ENCODE measurements at regions of chr20 and their contacts with region 1.

Region 1: GRCh38 chr20:5529331-5530148 is 212.8 kb upstream of the PROKR2 start:
- DNase-seq: peak; percentile 73 to 91 (median 82)
- ATAC-seq: peak; percentile 91
- H3K4me3 ChIP-seq: peak overlapping the region; percentile 11
- H3K4me3 Mint-ChIP-seq: peak overlapping the region; percentile 43
- H3K27ac ChIP-seq: no peak overlapping the region
- H3K27ac Mint-ChIP-seq: peak overlapping the region; percentile 61
- H3K4me1 ChIP-seq: peaks cover 13% of the 10 kb centered on the region
- H3K4me1 Mint-ChIP-seq: peaks cover 16% of the 10 kb centered on the region
- H3K27me3 ChIP-seq: no peaks in the 10 kb centered on the region
- H3K27me3 Mint-ChIP-seq: no peaks in the 10 kb centered on the region
- CTCF ChIP-seq: peak; percentile 67

Region 2: GRCh38 chr20:5543385-5543784 is 13.8 kb after region 1 on chr20:
- CTCF ChIA-PET with region 1: interaction called, 14 read pairs
- POLR2A ChIA-PET with region 1: no interaction called
- intact Hi-C with region 1: no loop called
- DNase-seq: no peak
- ATAC-seq: no peak
- H3K4me3 ChIP-seq: no peak overlapping the region
- H3K4me3 Mint-ChIP-seq: no peak overlapping the region
- H3K27ac ChIP-seq: no peak overlapping the region
- H3K27ac Mint-ChIP-seq: peak overlapping the region; percentile 3
- H3K4me1 ChIP-seq: no peaks in the 10 kb centered on the region
- H3K4me1 Mint-ChIP-seq: peaks cover 11% of the 10 kb centered on the region
- H3K27me3 ChIP-seq: no peaks in the 10 kb centered on the region
- H3K27me3 Mint-ChIP-seq: no peaks in the 10 kb centered on the region
- CTCF ChIP-seq: no peak

Region 3: GRCh38 chr20:5569021-5569420 is 39.5 kb after region 1 on chr20:
- CTCF ChIA-PET with region 1: interaction called, 20 read pairs
- POLR2A ChIA-PET with region 1: interaction called, 4 read pairs
- intact Hi-C with region 1: loop called in 1 of 2 experiments (anchors 1 kb)
- DNase-seq: peak in 12 of 14 experiments; percentile 20 to 75 (median 40)
- ATAC-seq: peak; percentile 75
- H3K4me3 ChIP-seq: no peak overlapping the region
- H3K4me3 Mint-ChIP-seq: no peak overlapping the region
- H3K27ac ChIP-seq: no peak overlapping the region
- H3K27ac Mint-ChIP-seq: peak overlapping the region; percentile 87
- H3K4me1 ChIP-seq: peaks cover 11% of the 10 kb centered on the region
- H3K4me1 Mint-ChIP-seq: peaks cover 46% of the 10 kb centered on the region
- H3K27me3 ChIP-seq: no peaks in the 10 kb centered on the region
- H3K27me3 Mint-ChIP-seq: no peaks in the 10 kb centered on the region
- CTCF ChIP-seq: peak; percentile 68

Region 4: DNA sequence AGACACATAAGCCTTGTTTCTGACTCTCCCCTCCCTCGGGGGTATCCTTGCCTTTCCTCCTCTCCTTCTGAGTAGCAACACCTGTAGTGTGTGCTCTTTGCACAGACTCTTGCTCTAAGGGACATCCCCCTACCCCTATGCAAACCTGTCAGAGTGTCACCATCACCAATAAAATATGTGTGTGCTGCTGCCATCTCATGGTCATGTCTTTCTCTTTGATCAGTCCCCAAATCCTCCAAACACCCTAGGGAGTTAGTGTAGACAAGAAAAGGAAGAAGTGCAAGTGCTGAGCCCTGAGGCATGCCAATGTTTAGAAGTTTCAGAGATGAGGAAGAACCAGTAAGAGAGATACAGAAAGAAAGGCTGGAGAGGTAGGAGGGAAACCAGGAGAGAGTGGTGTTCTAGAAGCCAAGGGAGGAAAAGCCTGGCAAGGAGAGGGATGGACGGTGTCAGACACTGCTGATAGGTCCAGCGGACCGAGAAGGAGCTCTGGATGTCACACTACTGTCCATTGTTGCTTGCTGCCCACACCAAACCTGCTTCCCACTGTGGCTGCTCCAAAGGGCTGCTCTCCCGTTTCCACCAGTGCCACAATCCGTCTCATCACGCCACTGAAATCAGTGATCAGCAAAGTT is 404.4 kb after region 1 on chr20:
- CTCF ChIA-PET with region 1: no interaction called
- POLR2A ChIA-PET with region 1: no interaction called
- intact Hi-C with region 1: loop called in 1 of 2 experiments (anchors 5 kb)
- DNase-seq: peak in 4 of 14 experiments; percentile 14 to 28 (median 18)
- ATAC-seq: peak; percentile 48
- H3K4me3 ChIP-seq: no peak overlapping the region
- H3K4me3 Mint-ChIP-seq: no peak overlapping the region
- H3K27ac ChIP-seq: no peak overlapping the region
- H3K27ac Mint-ChIP-seq: no peak overlapping the region
- H3K4me1 ChIP-seq: no peaks in the 10 kb centered on the region
- H3K4me1 Mint-ChIP-seq: no peaks in the 10 kb centered on the region
- H3K27me3 ChIP-seq: no peaks in the 10 kb centered on the region
- H3K27me3 Mint-ChIP-seq: no peaks in the 10 kb centered on the region
- CTCF ChIP-seq: no peak

Region 5: GRCh38 chr20:6008254-6008653 is 478.7 kb after region 1 on chr20:
- CTCF ChIA-PET with region 1: interaction called, 14 read pairs
- POLR2A ChIA-PET with region 1: no interaction called
- intact Hi-C with region 1: loop called in 1 of 2 experiments (anchors 1 kb)
- DNase-seq: peak in 3 of 14 experiments; percentile 7 to 60 (median 51)
- ATAC-seq: no peak
- H3K4me3 ChIP-seq: no peak overlapping the region
- H3K4me3 Mint-ChIP-seq: peak overlapping the region; percentile 99
- H3K27ac ChIP-seq: no peak overlapping the region
- H3K27ac Mint-ChIP-seq: peak overlapping the region; percentile 90
- H3K4me1 ChIP-seq: peaks cover 7% of the 10 kb centered on the region
- H3K4me1 Mint-ChIP-seq: peaks cover 52% of the 10 kb centered on the region
- H3K27me3 ChIP-seq: no peaks in the 10 kb centered on the region
- H3K27me3 Mint-ChIP-seq: no peaks in the 10 kb centered on the region
- CTCF ChIP-seq: no peak